Activated T-helper 1 cell treated with anti-CD3 and anti-CD28 coated beads, Interleukin-12 subunit alpha, Interleukin-12 subunit beta, Interleukin-2, Interleukin-4 antibody, amounts not matched to agents 30 ng/mL and 10 ng/mL and 1 ng/mL, durations not matched to agents 14 hours and 24 hours and 36 hours (primary cell): ENCODE measurements at regions of chr17 and their contacts with region 1.

Region 1: GRCh38 chr17:75855310-75856081 is at the start of gene WBP2:
- DNase-seq: peak; percentile 96
- H3K4me3 Mint-ChIP-seq: no peak within 1 kb of the TSS
- H3K27ac Mint-ChIP-seq: peak within 1 kb of the TSS; percentile 88
- H3K4me1 Mint-ChIP-seq: peaks cover 34% of the 10 kb centered on the region
- H3K27me3 Mint-ChIP-seq: no peaks in the 10 kb centered on the region
- total RNA-seq, gene WBP2: 68.8 and 74.4 TPM in 2 replicates

Region 2: GRCh38 chr17:75779231-75779986 is 76.1 kb before region 1 on chr17:
- intact Hi-C with region 1: loop called (anchors 1 kb)
- DNase-seq: peak; percentile 94
- H3K4me3 Mint-ChIP-seq: peak overlapping the region; percentile 98
- H3K27ac Mint-ChIP-seq: peak overlapping the region; percentile 99
- H3K4me1 Mint-ChIP-seq: peaks cover 52% of the 10 kb centered on the region
- H3K27me3 Mint-ChIP-seq: peaks cover 2% of the 10 kb centered on the region

Region 3: DNA sequence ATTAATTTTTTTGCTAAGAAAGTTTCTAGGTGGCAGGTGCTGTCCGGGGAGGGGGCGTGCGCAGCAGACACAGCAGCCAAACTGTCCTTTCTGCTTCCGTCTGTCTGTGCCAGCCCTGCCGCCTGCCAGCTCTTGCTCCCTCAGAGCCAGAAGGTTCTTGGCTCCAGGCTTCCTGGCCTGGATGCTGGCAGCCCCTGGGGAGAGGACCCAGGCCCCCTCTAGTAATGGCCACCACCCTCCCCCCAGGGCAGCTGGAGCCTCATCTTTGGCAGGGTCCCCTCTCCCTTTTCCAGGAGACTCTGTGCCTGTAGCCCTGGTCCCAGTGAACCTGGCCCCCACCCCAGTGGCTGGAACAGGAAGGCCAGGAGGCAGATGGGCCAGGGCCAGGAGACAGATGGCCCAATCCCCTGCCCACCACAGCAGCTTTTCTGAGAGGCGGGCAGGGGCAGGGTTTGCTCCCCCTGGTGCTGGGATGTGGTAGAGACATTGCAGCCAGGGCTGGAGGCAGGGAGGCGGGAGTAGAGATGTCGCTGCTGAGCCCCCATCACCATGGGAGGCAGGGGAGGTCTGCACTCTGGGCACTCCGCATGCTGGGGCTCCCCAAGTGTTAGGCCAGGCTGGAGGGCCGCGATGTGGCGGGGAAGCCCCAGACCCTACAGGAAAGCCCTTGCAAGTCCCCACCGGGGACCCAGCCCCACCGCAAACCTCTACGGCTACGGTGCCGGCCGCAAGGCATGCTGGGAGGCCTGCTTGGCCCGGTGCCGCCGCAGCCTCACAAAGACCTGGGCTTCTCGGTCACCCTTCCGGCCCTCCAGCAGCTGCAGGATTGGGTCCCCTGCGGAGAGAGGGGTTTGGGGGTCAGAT is 28.0 kb before region 1 on chr17:
- intact Hi-C with region 1: loop called (anchors 1 kb)
- DNase-seq: peak; percentile 56
- H3K4me3 Mint-ChIP-seq: peak overlapping the region; percentile 7
- H3K27ac Mint-ChIP-seq: peak overlapping the region; percentile 89
- H3K4me1 Mint-ChIP-seq: peaks cover 12% of the 10 kb centered on the region
- H3K27me3 Mint-ChIP-seq: no peaks in the 10 kb centered on the region

Region 4: DNA sequence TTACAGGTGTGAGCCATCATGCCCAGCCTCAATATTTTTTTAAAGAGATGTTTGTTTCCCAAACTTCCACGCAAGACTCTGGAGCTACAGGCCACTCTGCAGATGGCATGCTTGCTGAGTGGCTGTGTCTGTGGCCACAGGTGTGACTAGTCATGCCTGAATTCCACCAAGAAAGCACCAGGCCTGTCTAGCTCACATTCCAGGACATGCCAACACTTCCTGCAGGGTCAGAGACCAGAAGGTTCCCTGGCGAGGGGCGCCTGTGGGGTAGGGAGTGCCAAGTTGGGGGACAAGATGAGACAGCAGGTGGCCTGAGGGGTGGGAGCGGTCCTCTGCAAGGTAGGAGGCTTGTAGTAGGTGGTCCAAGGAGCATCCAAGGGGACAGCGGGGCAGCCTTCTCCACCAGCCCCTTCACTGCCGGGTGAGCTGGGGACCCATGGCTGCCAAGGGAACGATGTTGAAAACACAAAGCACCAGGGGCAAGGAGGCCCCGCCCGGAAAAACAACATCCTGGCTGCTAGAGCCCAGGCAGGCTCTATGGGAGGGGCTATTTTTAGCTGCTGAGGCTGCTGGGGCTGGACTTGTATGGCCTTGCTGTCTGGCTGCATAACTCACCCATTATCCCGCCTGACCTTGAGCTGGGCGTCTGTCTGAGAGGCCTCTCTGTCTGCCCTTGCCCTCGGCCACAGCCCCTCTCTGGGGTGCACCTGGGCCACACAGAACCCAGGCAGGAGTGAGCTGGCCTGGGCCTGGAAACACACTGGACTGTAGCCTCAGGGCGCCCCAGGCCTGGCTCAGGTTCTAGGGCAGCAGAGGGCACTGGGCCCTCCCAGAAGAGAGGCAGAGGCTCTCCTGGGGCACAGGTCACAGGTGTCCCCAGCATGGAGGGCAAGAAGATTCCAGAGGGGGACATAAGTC is 17.2 kb after region 1 on chr17:
- intact Hi-C with region 1: loop called (anchors 1 kb)
- DNase-seq: peak; percentile 69
- H3K4me3 Mint-ChIP-seq: peak overlapping the region; percentile 5
- H3K27ac Mint-ChIP-seq: peak overlapping the region; percentile 84
- H3K4me1 Mint-ChIP-seq: peaks cover 37% of the 10 kb centered on the region
- H3K27me3 Mint-ChIP-seq: no peaks in the 10 kb centered on the region

Region 5: GRCh38 chr17:75896415-75897159 is 41.1 kb after region 1 on chr17 and contains the start of gene TRIM65:
- intact Hi-C with region 1: loop called (anchors 1 kb)
- DNase-seq: peak; percentile 73
- H3K4me3 Mint-ChIP-seq: peak within 1 kb of the TSS; percentile 91
- H3K27ac Mint-ChIP-seq: peak within 1 kb of the TSS; percentile 77
- H3K4me1 Mint-ChIP-seq: peaks cover 26% of the 10 kb centered on the region
- H3K27me3 Mint-ChIP-seq: no peaks in the 10 kb centered on the region
- total RNA-seq, gene TRIM65: 45.0 and 53.7 TPM in 2 replicates

Region 6: GRCh38 chr17:75940724-75941441 is 85.4 kb after region 1 on chr17 and contains the start of gene FBF1:
- intact Hi-C with region 1: loop called (anchors 1 kb)
- DNase-seq: peak; percentile 88
- H3K4me3 Mint-ChIP-seq: peak within 1 kb of the TSS; percentile 88
- H3K27ac Mint-ChIP-seq: peak within 1 kb of the TSS; percentile 50
- H3K4me1 Mint-ChIP-seq: peaks cover 13% of the 10 kb centered on the region
- H3K27me3 Mint-ChIP-seq: no peaks in the 10 kb centered on the region
- total RNA-seq, gene FBF1: 19.4 and 20.0 TPM in 2 replicates